CD4-positive, alpha-beta memory T cell (primary cell): ENCODE measurements at regions of chr20 and their contacts with region 1.

Region 1: GRCh38 chr20:33810885-33811777 is at the start of gene CHMP4B:
- DNase-seq: peak; percentile 97 to 99 (median 98)
- H3K4me3 ChIP-seq: peak within 1 kb of the TSS; percentile 71 to 85
- H3K4me3 Mint-ChIP-seq: peak within 1 kb of the TSS; percentile 93 to 99 (median 97)
- H3K27ac ChIP-seq: peak within 1 kb of the TSS; percentile 88
- H3K27ac Mint-ChIP-seq: peak within 1 kb of the TSS; percentile 86 to 99 (median 95)
- H3K4me1 ChIP-seq: peaks cover 38% of the 10 kb centered on the region
- H3K4me1 Mint-ChIP-seq: peaks cover 35 to 52% (median 38%) of the 10 kb centered on the region in 4 donors
- H3K27me3 ChIP-seq: no peaks in the 10 kb centered on the region
- H3K27me3 Mint-ChIP-seq: peaks cover 0 to 2% of the 10 kb centered on the region in 2 donors
- total RNA-seq, gene CHMP4B: 53.0 to 54.0 TPM

Region 2: GRCh38 chr20:32109392-32110172 is 1701.5 kb before region 1 on chr20 and contains the start of gene TM9SF4:
- CTCF ChIA-PET with region 1: no interaction called
- POLR2A ChIA-PET with region 1: no interaction called
- intact Hi-C with region 1: loop called (anchors 5 kb)
- DNase-seq: peak; percentile 93 to 94 (median 94)
- H3K4me3 ChIP-seq: peak within 1 kb of the TSS; percentile 90 to 92
- H3K4me3 Mint-ChIP-seq: peak within 1 kb of the TSS; percentile 95 to 100 (median 98)
- H3K27ac ChIP-seq: peak within 1 kb of the TSS; percentile 100
- H3K27ac Mint-ChIP-seq: peak within 1 kb of the TSS; percentile 96 to 100 (median 100)
- H3K4me1 ChIP-seq: peaks cover 36% of the 10 kb centered on the region
- H3K4me1 Mint-ChIP-seq: peaks cover 26 to 44% (median 36%) of the 10 kb centered on the region in 4 donors
- H3K27me3 ChIP-seq: no peaks in the 10 kb centered on the region
- H3K27me3 Mint-ChIP-seq: no peaks in the 10 kb centered on the region
- total RNA-seq, gene TM9SF4: 36.4 to 40.7 TPM

Region 3: GRCh38 chr20:33554914-33555420 is 256.2 kb before region 1 on chr20:
- CTCF ChIA-PET with region 1: no interaction called
- POLR2A ChIA-PET with region 1: no interaction called
- intact Hi-C with region 1: loop called (anchors 1 kb)
- DNase-seq: peak; percentile 77 to 94 (median 91)
- H3K4me3 ChIP-seq: no peak overlapping the region
- H3K4me3 Mint-ChIP-seq: peak overlapping the region; percentile 57 to 82 (median 71)
- H3K27ac ChIP-seq: peak overlapping the region; percentile 76
- H3K27ac Mint-ChIP-seq: peak overlapping the region; percentile 91 to 99 (median 97)
- H3K4me1 ChIP-seq: peaks cover 20% of the 10 kb centered on the region
- H3K4me1 Mint-ChIP-seq: peaks cover 14 to 41% (median 24%) of the 10 kb centered on the region in 4 donors
- H3K27me3 ChIP-seq: no peaks in the 10 kb centered on the region
- H3K27me3 Mint-ChIP-seq: no peaks in the 10 kb centered on the region

Region 4: DNA sequence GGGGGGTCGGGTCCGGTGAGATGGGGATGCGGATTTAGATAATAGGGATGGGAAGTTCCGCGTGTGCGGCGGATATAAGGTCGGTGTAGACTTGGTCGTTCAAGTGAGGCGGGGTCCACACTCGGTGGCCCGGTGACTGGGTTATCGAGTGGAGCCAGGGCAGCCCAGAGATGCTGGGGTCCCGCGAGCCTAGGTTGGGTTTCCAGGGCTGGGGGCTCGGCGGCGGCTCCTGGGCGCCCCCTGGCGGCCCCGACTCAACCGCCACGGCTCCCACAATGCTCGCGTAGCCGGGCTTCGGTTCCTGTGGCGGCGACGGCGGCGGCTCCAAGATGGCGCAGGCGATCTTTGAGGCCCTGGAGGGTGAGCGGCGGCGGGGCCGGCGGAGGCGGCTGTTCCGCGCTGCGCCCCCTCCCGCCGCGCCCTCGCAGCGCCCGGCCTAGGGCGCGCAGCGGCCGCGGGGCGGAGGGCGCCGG is 79.4 kb before region 1 on chr20 and contains the start of gene ZNF341:
- CTCF ChIA-PET with region 1: no interaction called
- POLR2A ChIA-PET with region 1: interaction called, 22 read pairs
- intact Hi-C with region 1: loop called (anchors 1 kb)
- DNase-seq: peak in 4 of 5 donors; percentile 88 to 91 (median 90)
- H3K4me3 ChIP-seq: peak within 1 kb of the TSS; percentile 64 to 69
- H3K4me3 Mint-ChIP-seq: peak within 1 kb of the TSS; percentile 89 to 94 (median 93)
- H3K27ac ChIP-seq: peak within 1 kb of the TSS; percentile 64
- H3K27ac Mint-ChIP-seq: peak within 1 kb of the TSS; percentile 92 to 98 (median 96)
- H3K4me1 ChIP-seq: peaks cover 21% of the 10 kb centered on the region
- H3K4me1 Mint-ChIP-seq: peaks cover 10 to 25% (median 19%) of the 10 kb centered on the region in 4 donors
- H3K27me3 ChIP-seq: no peaks in the 10 kb centered on the region
- H3K27me3 Mint-ChIP-seq: no peaks in the 10 kb centered on the region
- total RNA-seq, gene ZNF341: 4.8 to 5.0 TPM

Region 5: DNA sequence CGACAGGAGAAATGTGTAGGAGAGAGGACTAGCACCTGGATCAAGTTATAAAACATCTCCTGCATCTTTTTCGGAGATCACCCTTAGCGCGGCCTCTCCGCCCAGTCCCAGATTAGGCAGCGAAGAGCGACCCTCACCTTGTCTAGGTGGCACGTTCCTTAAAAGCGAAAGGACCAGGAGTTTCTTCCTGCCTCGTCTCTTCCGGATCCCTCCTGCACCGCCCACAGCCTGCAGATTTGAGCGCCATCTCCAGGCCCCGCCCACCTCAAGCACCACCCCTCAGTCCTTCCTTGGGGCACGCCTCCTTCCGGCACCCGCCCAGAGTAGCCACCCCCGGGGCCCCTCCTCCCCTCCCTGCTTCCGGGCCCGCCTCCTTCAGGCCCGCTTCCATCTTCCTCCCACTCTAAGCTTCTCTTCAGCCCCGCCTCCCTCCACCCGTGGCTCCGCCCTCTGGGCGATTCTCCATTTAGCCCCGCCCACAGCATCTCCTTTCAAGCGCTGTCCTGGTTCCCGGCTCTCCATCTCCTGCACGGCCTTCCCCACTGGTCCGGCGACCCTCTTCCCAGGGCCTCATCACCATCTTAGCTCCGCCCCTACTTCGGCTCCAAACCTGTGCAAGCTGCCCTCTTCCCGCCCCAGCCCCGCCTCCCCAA is 181.9 kb after region 1 on chr20:
- CTCF ChIA-PET with region 1: interaction called, 4 read pairs
- POLR2A ChIA-PET with region 1: interaction called, 32 read pairs
- intact Hi-C with region 1: loop called (anchors 1 kb)
- DNase-seq: peak; percentile 99 to 100 (median 100)
- H3K4me3 ChIP-seq: peak overlapping the region; percentile 77 to 89
- H3K4me3 Mint-ChIP-seq: peak overlapping the region; percentile 96 to 99 (median 98)
- H3K27ac ChIP-seq: peak overlapping the region; percentile 94
- H3K27ac Mint-ChIP-seq: peak overlapping the region; percentile 99 to 100 (median 99)
- H3K4me1 ChIP-seq: peaks cover 58% of the 10 kb centered on the region
- H3K4me1 Mint-ChIP-seq: peaks cover 41 to 72% (median 53%) of the 10 kb centered on the region in 4 donors
- H3K27me3 ChIP-seq: no peaks in the 10 kb centered on the region
- H3K27me3 Mint-ChIP-seq: peaks cover 0 to 2% of the 10 kb centered on the region in 2 donors

Region 6: DNA sequence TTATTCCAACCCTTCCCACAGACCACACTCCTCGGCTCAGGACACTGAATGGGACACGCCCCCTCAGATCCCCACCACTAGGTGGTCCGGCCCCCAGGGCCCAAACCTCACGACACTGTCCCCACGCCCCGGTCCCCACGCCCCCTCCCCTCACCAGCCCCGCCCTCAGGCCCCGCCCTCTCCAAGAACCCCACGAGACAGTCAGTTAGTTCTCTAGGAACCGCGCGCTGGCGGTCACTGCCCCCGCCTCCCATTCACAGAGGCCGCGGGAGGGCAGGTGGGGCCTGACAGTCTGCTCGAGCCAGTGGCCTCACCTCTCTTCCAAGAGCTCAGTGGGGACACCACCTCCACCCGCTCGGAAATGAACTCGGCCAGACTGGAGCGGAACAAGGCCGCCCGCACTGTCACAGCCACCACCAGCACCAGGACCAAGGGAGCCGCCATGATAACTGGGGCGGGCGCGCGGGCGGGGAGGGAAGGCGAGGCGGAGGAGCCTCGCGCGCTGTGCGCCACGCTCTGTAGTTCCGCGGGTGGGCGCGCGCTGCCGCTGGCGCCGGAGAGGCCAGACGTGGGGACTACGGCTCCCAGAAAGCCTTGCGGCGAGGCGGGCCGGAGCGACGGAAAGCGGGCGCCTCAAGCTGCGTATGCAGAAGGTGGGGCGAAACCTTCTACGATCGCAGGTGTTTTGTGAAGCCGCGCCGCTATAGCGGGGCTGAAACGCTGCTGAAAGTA is 865.7 kb after region 1 on chr20 and contains the start of gene PIGU:
- CTCF ChIA-PET with region 1: no interaction called
- POLR2A ChIA-PET with region 1: no interaction called
- intact Hi-C with region 1: loop called (anchors 2 kb)
- DNase-seq: peak; percentile 94 to 96 (median 96)
- H3K4me3 ChIP-seq: peak within 1 kb of the TSS; percentile 57 to 67
- H3K4me3 Mint-ChIP-seq: peak within 1 kb of the TSS; percentile 95 to 99 (median 97)
- H3K27ac ChIP-seq: peak within 1 kb of the TSS; percentile 66
- H3K27ac Mint-ChIP-seq: peak within 1 kb of the TSS; percentile 93 to 98 (median 97)
- H3K4me1 ChIP-seq: peaks cover 19% of the 10 kb centered on the region
- H3K4me1 Mint-ChIP-seq: peaks cover 11 to 25% (median 19%) of the 10 kb centered on the region in 4 donors
- H3K27me3 ChIP-seq: no peaks in the 10 kb centered on the region
- H3K27me3 Mint-ChIP-seq: no peaks in the 10 kb centered on the region
- total RNA-seq, gene PIGU: 15.1 to 18.2 TPM